Right cardiac atrium (tissue), 5 donors: ENCODE measurements at regions of chr1 and their contacts with region 1.

Region 1: GRCh38 chr1:116570358-116571200 is at the start of gene CD58:
- DNase-seq: peak; percentile 94 to 98 (median 97)
- ATAC-seq: peak; percentile 95 to 96
- H3K4me3 ChIP-seq: peak within 1 kb of the TSS; percentile 95
- H3K27ac ChIP-seq: peak within 1 kb of the TSS; percentile 100
- H3K4me1 ChIP-seq: peaks cover 6% of the 10 kb centered on the region
- H3K27me3 ChIP-seq: no peaks in the 10 kb centered on the region
- total RNA-seq, gene CD58: 17.8 to 28.7 (median 21.4) TPM

Region 2: DNA sequence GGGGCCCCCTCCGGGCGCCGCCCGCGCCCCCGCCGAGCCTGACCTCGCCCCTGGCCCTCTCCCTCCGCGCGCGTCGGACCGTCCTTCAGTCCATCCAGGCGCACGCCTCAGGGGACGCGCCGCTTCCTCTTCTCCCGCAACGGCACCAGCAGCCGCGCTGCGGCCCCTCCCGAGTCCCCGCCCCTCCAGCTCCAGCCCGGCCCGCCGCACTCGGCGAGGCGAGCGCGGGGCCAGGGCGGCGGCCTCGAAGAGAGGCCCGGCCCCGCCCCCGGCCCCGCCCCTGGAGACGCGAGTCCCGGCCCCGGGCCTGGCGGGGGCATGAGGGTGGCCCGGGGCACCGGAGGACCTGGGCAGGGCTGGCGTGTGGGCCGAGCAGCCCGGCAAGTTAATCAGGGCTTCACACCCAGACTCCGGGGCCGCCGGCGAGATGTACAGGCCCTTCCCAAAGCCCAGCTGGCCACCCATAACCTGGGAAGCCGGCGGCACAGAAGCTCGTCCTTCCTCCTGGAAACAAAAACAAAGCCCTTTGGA is 97.1 kb after region 1 on chr1 and contains the start of gene IGSF3:
- intact Hi-C with region 1: loop called (anchors 5 to 10 kb)
- DNase-seq: peak; percentile 83 to 93 (median 92)
- ATAC-seq: peak; percentile 91 to 92
- H3K4me3 ChIP-seq: peak within 1 kb of the TSS; percentile 98
- H3K27ac ChIP-seq: no peak within 1 kb of the TSS
- H3K4me1 ChIP-seq: no peaks in the 10 kb centered on the region
- H3K27me3 ChIP-seq: no peaks in the 10 kb centered on the region
- total RNA-seq, gene IGSF3: 11.7 to 15.5 (median 13.3) TPM

Region 3: DNA sequence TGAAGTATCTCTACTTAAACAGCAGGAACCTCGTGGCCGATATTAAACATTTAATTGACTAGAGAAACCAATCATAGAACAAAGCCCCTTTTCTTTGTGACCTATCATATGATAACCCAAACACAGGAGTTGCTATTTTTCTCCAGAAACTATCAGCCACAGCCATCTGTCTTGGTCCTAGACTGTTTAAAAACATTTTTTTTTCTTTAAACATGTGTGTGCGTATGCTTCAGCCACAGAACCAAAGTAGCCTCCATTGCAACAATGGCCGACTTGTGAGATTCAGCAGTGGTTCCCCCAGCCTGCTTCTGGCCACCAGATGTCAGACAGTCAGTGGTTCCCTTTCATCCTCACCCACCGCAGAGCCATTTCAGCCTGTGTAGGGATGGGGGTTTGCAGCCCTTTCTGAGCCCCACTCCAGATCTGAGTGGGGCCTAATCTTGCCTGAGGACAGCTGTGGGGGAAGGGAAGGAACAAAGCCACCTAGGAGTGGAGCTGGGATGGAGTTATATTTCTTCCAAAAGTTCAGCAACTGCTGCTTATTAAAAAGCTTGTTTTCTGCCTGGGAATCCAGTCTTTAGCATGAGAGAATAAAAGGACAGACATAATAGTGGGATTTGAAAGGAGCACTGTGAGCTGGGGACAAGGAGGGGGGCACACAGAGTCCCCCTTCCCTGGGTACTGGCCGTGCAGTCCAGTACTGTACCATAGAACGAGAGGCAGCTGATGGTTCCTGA is 108.7 kb after region 1 on chr1:
- intact Hi-C with region 1: loop called in 2 of 4 experiments (anchors 10 kb)
- DNase-seq: no peak
- ATAC-seq: no peak
- H3K4me3 ChIP-seq: no peak overlapping the region
- H3K27ac ChIP-seq: no peak overlapping the region
- H3K4me1 ChIP-seq: no peaks in the 10 kb centered on the region
- H3K27me3 ChIP-seq: no peaks in the 10 kb centered on the region